ENCODE measurements at regions of chr20 and their contacts with region 1.

Region 1: DNA sequence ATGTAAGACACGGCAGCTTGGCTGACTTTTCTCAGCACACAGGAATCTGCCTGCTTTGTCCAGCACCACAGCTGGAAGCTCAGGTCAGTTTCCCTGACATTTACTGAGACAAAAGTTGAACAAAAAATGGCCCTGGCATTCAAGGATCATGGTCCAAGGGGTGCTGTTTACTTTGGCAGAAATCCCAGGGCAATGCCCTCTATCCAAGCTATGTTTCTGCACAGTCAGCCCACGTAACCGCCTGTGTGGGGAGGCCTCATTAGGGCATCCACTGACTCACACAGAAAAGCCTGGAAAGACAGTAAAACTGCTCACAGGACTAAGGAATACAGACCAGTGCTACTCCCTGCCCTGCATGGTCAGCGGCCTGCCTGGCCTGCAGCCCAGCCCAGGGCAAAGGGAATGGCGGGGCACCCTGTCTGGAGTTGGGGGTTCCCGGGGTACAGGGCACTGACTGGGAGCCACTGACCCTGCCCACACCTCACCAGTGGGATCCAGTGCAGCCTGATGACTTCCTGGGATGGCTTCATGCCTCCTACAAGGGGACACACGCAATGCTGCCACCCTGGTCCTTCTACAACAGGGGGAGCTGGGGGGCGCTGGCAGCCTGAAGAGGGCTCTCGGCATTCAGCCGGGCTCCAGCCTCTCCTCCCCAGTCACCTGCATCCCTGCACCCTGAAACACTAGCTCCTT is 77.1 kb downstream of the NINL start:
- DNase-seq: peak in 1 of 10 donors; percentile 74

Region 2: DNA sequence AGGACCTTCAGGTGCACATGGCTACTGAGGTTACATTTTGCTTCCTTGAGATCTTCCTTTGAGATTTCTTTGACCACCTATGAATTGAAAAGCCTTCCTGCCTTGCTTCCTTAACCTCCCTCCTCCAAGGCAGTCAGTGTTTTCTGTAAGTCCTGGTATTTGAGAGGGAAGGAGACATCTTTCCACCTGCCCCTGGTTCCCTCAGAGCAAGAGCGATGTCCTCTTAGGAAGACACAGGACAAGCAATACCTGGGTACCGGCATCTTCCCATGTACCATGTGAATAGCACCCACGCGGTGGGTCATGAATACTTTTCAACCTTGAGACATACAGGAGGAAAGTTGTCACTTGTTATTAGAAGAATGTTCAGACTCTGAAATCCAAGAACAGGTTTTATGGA is 63.7 kb before region 1 on chr20:
- intact Hi-C with region 1: loop called (anchors 10 kb)
- DNase-seq: no peak

Region 3: GRCh38 chr20:25676164-25676806 is 168.1 kb after region 1 on chr20:
- intact Hi-C with region 1: no loop called
- DNase-seq: no peak

Measured in posterior cingulate gyrus (tissue), 11 donors.